Heart left ventricle (tissue), 16 donors: ENCODE measurements at regions of chr16 and their contacts with region 1.

Region 1: GRCh38 chr16:68237243-68238028 is 1.5 kb upstream of the ESRP2 start:
- DNase-seq: peak; percentile 98 to 99 (median 98)
- ATAC-seq: peak; percentile 90 to 96 (median 93)
- H3K4me3 ChIP-seq: peak overlapping the region; percentile 33 to 74 (median 62)
- H3K27ac ChIP-seq: peak overlapping the region; percentile 45 to 94 (median 86)
- H3K4me1 ChIP-seq: peaks cover 0 to 41% (median 19%) of the 10 kb centered on the region in 12 donors
- H3K27me3 ChIP-seq: peaks cover 0 to 7% (median 0%) of the 10 kb centered on the region in 9 donors
- CTCF ChIP-seq: peak in 1 of 12 donors; percentile 6
- POLR2A ChIP-seq: peak in 1 of 2 donors; percentile 95

Region 2: GRCh38 chr16:66740010-66740409 is 1497.4 kb before region 1 on chr16:
- intact Hi-C with region 1: loop called in 1 of 10 experiments (anchors 10 kb)
- DNase-seq: no peak
- ATAC-seq: no peak
- H3K4me3 ChIP-seq: no peak overlapping the region
- H3K27ac ChIP-seq: peak overlapping the region; percentile 42 to 94 (median 86)
- H3K4me1 ChIP-seq: peaks cover 13 to 64% (median 39%) of the 10 kb centered on the region in 12 donors
- H3K27me3 ChIP-seq: no peaks in the 10 kb centered on the region
- CTCF ChIP-seq: peak; percentile 35 to 67 (median 50)
- POLR2A ChIP-seq: no peak

Region 3: GRCh38 chr16:67806428-67807147 is 430.8 kb before region 1 on chr16 and contains the starts of genes RANBP10 and TSNAXIP1:
- intact Hi-C with region 1: loop called in 1 of 10 experiments (anchors 10 kb)
- DNase-seq: peak; percentile 97 to 98 (median 98)
- ATAC-seq: peak; percentile 98 to 99 (median 98)
- H3K4me3 ChIP-seq: peak within 1 kb of the TSS; percentile 62 to 98 (median 80)
- H3K27ac ChIP-seq: peak within 1 kb of the TSS in 11 of 12 donors; percentile 68 to 93 (median 84)
- H3K4me1 ChIP-seq: peaks cover 0 to 39% (median 17%) of the 10 kb centered on the region in 12 donors
- H3K27me3 ChIP-seq: no peaks in the 10 kb centered on the region
- CTCF ChIP-seq: no peak
- POLR2A ChIP-seq: peak in 1 of 2 donors; percentile 91
- total RNA-seq, gene RANBP10: 7.1 to 19.7 (median 12.3) TPM
- total RNA-seq, gene TSNAXIP1: 0.16 to 0.93 (median 0.46) TPM in 8 of 9 donors, not detected in the other

Region 4: GRCh38 chr16:67968400-67969253 is 268.8 kb before region 1 on chr16 and contains the start of gene SLC12A4:
- intact Hi-C with region 1: loop called in 1 of 10 experiments (anchors 10 kb)
- DNase-seq: peak; percentile 93 to 95 (median 94)
- ATAC-seq: peak; percentile 84 to 91 (median 90)
- H3K4me3 ChIP-seq: peak within 1 kb of the TSS; percentile 67 to 100 (median 91)
- H3K27ac ChIP-seq: peak within 1 kb of the TSS; percentile 95 to 100 (median 99)
- H3K4me1 ChIP-seq: peaks cover 21 to 49% (median 41%) of the 10 kb centered on the region in 12 donors
- H3K27me3 ChIP-seq: no peaks in the 10 kb centered on the region
- CTCF ChIP-seq: peak in 4 of 12 donors; percentile 14 to 28 (median 23)
- POLR2A ChIP-seq: peak; percentile 94 to 98
- total RNA-seq, gene SLC12A4: 64.6 to 92.2 (median 86.8) TPM

Region 5: GRCh38 chr16:68328151-68328859 is 90.9 kb after region 1 on chr16:
- intact Hi-C with region 1: loop called in 7 of 10 experiments (anchors 1 to 5 kb)
- DNase-seq: peak; percentile 76 to 84 (median 81)
- ATAC-seq: peak; percentile 85 to 95 (median 94)
- H3K4me3 ChIP-seq: no peak overlapping the region
- H3K27ac ChIP-seq: no peak overlapping the region
- H3K4me1 ChIP-seq: peaks cover 0 to 27% (median 7%) of the 10 kb centered on the region in 12 donors
- H3K27me3 ChIP-seq: no peaks in the 10 kb centered on the region
- CTCF ChIP-seq: peak; percentile 85 to 97 (median 92)
- POLR2A ChIP-seq: no peak

Region 6: DNA sequence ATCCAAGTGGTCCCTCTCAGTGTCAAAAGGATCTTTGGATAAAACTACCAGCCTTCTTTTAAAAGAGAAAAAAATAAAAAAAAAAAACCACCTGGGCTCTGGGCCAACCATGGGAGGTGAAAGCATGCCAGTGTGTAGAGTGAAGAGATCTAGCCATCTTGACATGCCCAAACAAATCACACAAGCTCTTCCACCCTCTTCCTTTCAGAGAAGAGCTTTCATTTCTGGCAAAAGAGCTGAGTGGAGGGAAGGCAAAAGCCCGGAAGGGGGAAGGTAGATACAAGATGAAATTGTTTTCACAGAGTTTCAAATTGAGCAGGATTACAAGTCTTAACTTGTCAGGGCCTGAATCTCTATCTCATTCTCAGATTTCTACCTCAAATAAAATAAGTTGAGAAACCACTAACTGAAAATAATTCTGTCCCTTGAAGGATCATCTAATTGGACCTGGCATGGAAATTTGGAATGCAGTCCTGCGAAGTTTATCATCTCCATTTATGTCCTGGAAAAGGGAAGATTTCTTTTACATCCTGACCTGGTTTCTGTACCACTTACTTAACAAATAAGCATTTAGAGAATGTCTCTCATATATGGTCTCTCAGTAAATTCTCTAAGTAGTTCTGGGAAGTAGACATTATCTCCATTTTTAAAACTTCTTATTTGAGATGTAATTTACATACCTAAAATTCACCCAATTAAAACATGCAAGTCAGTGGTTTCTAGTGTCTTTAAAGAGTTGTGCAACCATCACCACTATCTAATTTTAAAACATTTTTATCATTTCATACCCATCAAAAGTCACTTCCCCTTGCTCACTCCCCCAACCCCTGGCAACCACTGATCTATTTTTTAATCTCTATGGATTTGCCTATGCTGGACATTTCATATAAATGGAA is 699.5 kb after region 1 on chr16:
- intact Hi-C with region 1: no loop called
- DNase-seq: no peak
- ATAC-seq: no peak
- H3K4me3 ChIP-seq: no peak overlapping the region
- H3K27ac ChIP-seq: no peak overlapping the region
- H3K4me1 ChIP-seq: no peaks in the 10 kb centered on the region
- H3K27me3 ChIP-seq: no peaks in the 10 kb centered on the region
- CTCF ChIP-seq: no peak
- POLR2A ChIP-seq: no peak